ENCODE measurements at regions of chr4 and their contacts with region 1.

Region 1: GRCh38 chr4:177250056-177250696 is 59.5 kb upstream of the NEIL3 start:
- DNase-seq: peak; percentile 79
- ATAC-seq: peak; percentile 94
- H3K4me3 Mint-ChIP-seq: no peak overlapping the region
- H3K27ac Mint-ChIP-seq: no peak overlapping the region
- H3K4me1 Mint-ChIP-seq: peaks cover 11% of the 10 kb centered on the region
- H3K27me3 Mint-ChIP-seq: peaks cover 25% of the 10 kb centered on the region

Region 2: GRCh38 chr4:177239878-177240277 is 10.3 kb before region 1 on chr4:
- CTCF ChIA-PET with region 1: interaction called, 11 read pairs
- DNase-seq: no peak
- ATAC-seq: no peak
- H3K4me3 Mint-ChIP-seq: no peak overlapping the region
- H3K27ac Mint-ChIP-seq: no peak overlapping the region
- H3K4me1 Mint-ChIP-seq: no peaks in the 10 kb centered on the region
- H3K27me3 Mint-ChIP-seq: peaks cover 2% of the 10 kb centered on the region

Region 3: DNA sequence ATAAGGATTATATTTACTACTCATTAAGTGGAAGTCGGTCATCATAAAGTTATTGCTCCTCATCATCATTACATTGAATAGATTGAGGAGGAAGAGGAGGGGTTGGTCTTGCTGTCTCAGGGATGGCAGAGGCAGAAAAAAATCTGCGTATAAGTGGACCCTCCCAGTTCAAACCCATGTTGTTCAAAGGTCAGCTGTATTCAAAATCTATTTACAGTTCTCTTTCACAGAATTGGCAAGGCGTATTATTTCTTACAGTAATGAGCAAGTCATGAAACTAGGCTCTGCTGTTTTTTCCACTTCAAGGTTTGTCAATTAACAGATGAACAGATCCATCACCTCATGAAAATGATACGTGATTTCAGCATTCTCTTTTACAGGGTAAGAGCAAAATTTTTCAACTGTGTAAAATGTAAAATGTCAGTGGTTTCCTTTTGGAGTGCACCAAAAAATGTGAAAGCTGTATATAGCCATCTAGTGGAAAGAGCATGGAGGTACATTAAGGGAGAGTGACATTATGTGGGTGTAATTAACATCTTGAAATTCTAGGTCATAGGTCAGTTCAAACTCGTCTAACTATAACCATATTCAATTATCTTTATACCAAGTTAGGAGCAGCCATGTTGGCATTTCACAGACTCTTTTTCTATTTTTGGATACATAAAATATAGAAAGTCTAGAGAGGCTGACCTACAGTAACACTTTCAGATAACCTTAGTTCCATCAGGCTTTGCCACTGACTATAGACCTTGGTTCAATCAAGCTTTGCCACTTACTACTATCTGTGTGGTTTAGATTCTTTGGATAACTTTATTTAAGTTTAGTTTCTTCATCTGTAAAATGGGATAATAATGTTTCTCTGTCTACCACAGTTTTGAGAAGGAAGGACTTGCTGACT is 89.5 kb after region 1 on chr4:
- CTCF ChIA-PET with region 1: interaction called, 60 read pairs
- DNase-seq: no peak
- ATAC-seq: peak; percentile 83
- H3K4me3 Mint-ChIP-seq: no peak overlapping the region
- H3K27ac Mint-ChIP-seq: peak overlapping the region; percentile 61
- H3K4me1 Mint-ChIP-seq: peaks cover 16% of the 10 kb centered on the region
- H3K27me3 Mint-ChIP-seq: no peaks in the 10 kb centered on the region

Measured in activated CD8-positive, alpha-beta memory T cell treated with anti-CD3 and anti-CD28 coated beads, Interleukin-2, amount 10 ng/mL, durations not matched to agents 7 days and 5 days (primary cell).